ENCODE measurements at regions of chr6 and their contacts with region 1.

Region 1: DNA sequence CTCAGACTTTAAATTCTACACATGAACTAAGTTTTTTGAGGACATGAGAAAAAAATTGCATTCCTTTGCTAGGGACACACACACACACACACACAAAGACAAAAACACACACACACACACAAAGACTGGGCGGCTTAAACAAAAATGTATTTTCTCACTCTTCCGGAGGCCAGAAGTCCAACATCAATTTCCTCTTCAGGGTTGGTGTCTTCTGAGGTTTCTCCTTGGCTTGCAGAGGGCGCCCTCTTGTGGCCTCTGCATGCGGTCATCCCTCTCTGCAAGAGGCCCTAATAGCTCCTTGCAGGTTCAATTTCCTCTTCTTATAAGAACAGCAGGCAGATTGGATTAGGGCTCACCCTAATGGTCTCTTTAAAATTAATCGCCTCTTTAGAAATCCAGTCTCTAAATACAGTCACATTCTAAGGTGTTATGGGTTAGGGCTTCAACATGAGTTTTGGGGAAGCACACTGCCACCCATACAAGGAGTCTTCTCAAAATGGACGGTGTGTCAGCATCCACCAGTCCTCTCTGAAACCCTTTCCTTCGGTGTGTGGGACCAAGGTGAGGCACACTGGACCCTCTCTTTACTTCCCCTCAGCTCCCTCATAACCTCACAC is 61.4 kb downstream of the GPR6 start:
- DNase-seq: peak; percentile 79
- H3K4me3 ChIP-seq: peak overlapping the region; percentile 38
- H3K27ac ChIP-seq: no peak overlapping the region
- H3K27me3 ChIP-seq: peaks cover under 1% of the 10 kb centered on the region
- CTCF ChIP-seq: peak; percentile 98

Region 2: GRCh38 chr6:109526905-109527628 is 512.4 kb before region 1 on chr6:
- CTCF ChIA-PET with region 1: interaction called, 45 read pairs
- POLR2A ChIA-PET with region 1: no interaction called
- DNase-seq: peak; percentile 23
- H3K4me3 ChIP-seq: no peak overlapping the region
- H3K27ac ChIP-seq: no peak overlapping the region
- H3K27me3 ChIP-seq: peaks cover 2% of the 10 kb centered on the region
- CTCF ChIP-seq: peak; percentile 68

Region 3: DNA sequence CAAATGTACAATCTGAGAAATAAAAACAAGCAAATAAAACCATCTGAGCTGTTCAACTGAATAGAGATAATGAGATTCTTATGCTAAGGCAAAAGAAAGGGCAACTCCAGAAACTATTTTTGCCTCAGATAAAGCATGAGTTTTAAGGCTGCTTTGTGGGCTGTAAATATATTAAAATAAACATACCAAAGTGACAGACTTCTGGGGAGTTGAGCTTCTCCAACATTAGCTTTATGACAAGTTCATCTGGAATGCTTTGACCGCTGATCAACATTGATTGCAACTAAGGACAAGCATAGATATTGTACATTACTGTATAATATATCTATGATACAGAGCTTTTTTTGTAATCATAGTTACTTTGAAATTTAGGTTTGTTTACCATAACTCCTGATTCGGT is 367.7 kb before region 1 on chr6:
- CTCF ChIA-PET with region 1: interaction called, 10 read pairs
- POLR2A ChIA-PET with region 1: no interaction called
- DNase-seq: no peak
- H3K4me3 ChIP-seq: no peak overlapping the region
- H3K27ac ChIP-seq: no peak overlapping the region
- H3K27me3 ChIP-seq: no peaks in the 10 kb centered on the region
- CTCF ChIP-seq: no peak

Region 4: DNA sequence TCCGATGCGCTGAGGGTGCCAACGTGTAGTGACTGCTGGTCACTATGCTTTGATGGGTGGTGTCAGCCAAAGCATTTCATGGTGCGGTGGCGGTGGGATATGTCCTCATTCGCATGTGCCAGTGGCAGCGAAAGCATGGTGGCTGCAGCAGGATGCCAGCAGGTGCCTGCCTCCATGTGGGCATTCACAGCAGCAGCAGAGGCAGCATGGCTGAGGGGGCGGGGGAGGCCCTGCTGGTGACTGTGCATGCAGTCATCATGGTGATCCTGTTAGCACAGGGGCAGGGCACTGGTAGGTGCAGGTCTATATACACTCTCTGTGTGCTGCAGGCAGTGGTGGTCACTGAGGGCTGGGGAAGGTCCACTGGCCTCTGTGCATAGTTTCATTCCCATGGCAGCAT is 326.4 kb before region 1 on chr6:
- CTCF ChIA-PET with region 1: interaction called, 70 read pairs
- POLR2A ChIA-PET with region 1: no interaction called
- DNase-seq: no peak
- H3K4me3 ChIP-seq: no peak overlapping the region
- H3K27ac ChIP-seq: no peak overlapping the region
- H3K27me3 ChIP-seq: no peaks in the 10 kb centered on the region
- CTCF ChIP-seq: no peak

Region 5: DNA sequence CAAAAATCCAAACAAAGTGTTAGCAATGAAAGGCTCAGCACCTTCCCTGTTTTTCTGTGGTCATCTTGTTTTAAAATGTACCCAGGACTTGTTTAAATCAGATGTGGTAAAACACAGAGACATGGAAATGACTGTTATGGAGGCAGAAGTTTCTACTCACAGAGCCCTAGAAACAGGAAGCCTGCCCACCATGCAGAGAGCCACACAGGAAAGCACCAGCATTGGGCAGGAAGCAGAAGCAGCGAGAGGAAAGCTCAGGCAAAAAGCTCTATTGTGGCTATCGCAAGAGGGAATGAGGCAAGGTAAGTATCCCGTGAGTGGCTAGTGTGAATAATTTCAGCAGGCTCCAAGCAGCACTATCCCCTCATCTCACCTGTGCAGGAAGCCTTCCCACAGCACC is 18.6 kb before region 1 on chr6:
- CTCF ChIA-PET with region 1: interaction called, 12 read pairs
- POLR2A ChIA-PET with region 1: no interaction called
- DNase-seq: no peak
- H3K4me3 ChIP-seq: no peak overlapping the region
- H3K27ac ChIP-seq: no peak overlapping the region
- H3K27me3 ChIP-seq: peaks cover 4% of the 10 kb centered on the region
- CTCF ChIP-seq: no peak

Region 6: DNA sequence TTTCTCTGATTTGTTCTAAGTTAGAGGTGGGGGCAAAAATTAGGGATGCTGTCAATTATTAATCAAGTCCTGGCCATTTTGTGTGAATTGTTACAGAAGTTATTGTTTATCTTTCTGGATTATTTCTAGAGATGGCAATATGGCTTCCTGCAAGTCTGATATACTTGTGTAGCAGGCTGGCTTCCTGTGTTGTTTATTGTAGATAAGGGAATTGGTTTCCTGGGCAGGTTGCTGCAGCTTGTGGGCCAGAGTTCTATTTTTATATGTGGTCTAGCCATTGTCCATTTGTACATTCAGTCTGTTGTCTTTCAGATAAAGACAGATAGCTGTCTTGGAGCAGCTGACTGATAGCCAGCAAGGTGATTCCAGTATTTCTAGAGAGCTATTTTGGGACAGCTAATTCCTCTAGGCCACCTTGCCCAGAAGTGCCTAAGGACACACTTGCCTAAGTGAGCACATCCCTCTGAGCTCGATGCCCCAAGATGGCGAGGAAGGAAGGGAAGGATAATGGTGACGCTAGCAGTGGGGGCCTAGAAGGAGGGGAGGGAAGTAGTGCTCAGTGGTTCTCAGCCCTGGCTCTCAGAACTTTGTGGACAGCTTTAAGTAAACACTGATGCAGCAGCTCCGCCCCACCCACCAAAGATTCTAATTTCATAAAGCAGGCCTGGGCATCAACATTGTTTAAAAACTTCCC is 350.4 kb after region 1 on chr6:
- CTCF ChIA-PET with region 1: interaction called, 90 read pairs
- POLR2A ChIA-PET with region 1: no interaction called
- DNase-seq: no peak
- H3K4me3 ChIP-seq: no peak overlapping the region
- H3K27ac ChIP-seq: no peak overlapping the region
- H3K27me3 ChIP-seq: peaks cover 9% of the 10 kb centered on the region
- CTCF ChIP-seq: no peak

Measured in AG04450 (cell line).